Panc1 (cell line): ENCODE measurements at regions of chr7 and their contacts with region 1.

Region 1: DNA sequence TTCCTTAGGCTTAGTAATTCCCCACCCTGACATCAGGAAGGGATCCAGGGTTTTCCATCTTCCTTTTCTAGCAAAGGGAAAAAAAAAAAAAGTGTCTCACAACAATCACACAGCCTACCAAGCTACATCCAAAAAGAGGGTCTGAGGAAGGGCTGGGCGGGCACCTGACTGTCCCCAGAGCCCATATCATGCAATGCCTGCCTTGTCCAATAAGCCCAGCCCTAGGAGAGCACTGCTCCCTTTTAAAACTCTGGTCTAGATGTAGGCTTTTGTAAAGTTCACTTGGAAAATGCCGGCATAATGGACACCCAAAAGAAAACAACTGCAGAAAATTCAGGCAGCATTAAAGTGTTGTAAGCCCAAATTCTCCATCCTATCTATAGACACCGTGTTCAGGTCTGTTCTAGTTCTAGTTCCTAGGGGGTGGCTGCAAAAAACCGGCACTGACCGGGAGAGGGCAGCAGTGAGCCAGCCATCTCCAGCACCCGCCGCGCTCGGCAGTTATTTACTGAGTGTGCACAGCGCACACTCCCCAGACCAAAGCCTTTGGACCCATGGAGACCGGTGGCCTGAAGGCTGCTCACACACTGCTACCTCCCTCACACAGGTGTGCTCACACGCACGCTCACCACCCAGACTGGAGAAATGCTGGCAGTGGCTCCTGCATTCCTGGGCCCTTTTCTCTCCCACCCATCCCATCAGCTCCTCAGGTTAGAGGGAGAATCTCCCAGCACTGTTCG is 48.7 kb downstream of the PODXL start:
- DNase-seq: peak; percentile 52
- ATAC-seq: peak; percentile 88
- H3K4me3 ChIP-seq: peak overlapping the region in 1 of 2 experiments; percentile 7; a peak in 1 of 4 replicates
- H3K27ac ChIP-seq: no peak overlapping the region
- H3K4me1 ChIP-seq: no peaks in the 10 kb centered on the region
- H3K27me3 ChIP-seq: no peaks in the 10 kb centered on the region
- CTCF ChIP-seq: peak; percentile 97

Region 2: DNA sequence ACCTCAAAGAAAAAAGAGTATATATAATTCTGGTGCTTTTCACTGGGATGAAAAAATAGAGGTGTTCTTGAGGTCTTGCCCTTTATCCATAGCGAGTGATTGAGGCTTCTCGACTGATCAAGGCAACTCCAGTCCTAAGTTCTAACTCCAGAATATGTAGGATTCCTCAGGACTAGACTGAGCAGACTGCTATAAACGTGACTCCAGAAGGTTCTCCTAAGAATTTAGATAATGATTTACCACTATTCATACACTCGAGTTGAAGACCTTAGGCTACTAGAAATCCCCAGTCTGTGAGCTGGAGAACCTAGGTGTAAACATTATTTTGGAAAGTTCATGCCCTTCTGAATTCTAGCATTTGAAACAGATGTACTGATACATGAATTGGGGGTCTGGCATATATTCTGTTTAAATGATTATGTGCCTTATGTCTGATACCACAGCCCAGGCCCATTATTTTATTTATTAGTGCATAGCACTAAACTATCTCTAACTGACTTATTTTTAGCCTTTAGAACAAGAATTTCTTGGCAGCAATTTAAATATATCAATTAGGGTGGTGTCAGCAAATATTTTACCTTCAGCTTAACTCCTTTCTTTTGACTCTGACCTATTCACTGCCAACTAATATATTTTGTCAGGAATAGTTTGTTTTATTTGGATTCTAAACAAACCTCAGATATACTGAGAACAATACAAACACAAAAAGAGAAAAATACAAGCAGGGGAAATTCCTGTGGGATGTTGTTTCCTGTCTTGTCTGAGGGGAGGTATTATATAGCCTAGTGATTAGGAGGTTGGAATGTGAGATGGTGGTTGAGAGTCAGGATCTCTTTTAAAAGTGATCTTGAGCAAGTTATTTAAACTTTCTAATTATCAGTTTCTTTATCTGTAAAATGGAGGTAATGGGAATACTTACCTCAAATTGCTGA is 27.1 kb before region 1 on chr7:
- CTCF ChIA-PET with region 1: no interaction called
- POLR2A ChIA-PET with region 1: no interaction called
- in situ Hi-C with region 1: no loop called
- intact Hi-C with region 1: no loop called
- DNase-seq: no peak
- ATAC-seq: no peak
- H3K4me3 ChIP-seq: no peak overlapping the region
- H3K27ac ChIP-seq: no peak overlapping the region
- H3K4me1 ChIP-seq: no peaks in the 10 kb centered on the region
- H3K27me3 ChIP-seq: no peaks in the 10 kb centered on the region
- CTCF ChIP-seq: no peak

Region 3: DNA sequence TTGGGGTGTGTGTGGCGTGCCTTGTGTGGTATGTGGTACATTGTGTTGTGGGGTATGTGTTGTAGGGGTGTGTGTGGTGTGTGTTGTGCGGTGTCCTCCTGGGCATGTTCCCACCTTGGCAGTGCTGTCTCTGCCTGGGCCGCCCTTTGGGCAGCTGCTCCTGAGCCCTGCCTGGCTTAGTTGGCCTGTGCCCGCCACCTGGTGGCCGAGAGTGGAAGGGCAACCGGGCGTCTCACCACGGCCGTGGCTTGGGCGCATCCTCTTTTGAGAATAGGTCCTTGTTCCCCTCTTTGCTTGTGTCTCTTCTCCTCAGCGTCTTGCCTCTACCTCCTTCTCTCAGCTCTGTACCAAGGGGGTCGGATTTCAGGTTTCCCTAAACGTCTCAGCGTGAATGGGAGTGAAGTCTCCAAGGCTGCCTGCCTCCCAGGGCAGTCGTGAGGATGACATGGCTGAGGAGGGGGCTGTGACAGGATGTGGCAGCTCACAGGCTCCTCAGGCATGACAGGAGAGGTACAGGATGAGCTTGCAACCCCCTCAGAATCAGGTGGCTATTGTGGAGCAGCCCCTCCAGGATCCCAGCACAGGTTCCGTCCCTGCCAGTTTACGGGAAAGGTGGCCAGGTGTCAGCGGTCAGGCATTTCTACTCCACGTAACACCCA is 147.0 kb after region 1 on chr7:
- CTCF ChIA-PET with region 1: interaction called, 3 read pairs
- POLR2A ChIA-PET with region 1: no interaction called
- in situ Hi-C with region 1: no loop called
- intact Hi-C with region 1: loop called (anchors 1 kb)
- DNase-seq: peak; percentile 64
- ATAC-seq: peak; percentile 93
- H3K4me3 ChIP-seq: no peak overlapping the region
- H3K27ac ChIP-seq: no peak overlapping the region
- H3K4me1 ChIP-seq: peaks cover 7% of the 10 kb centered on the region; the same call in 1 of the 2 replicates
- H3K27me3 ChIP-seq: no peaks in the 10 kb centered on the region
- CTCF ChIP-seq: peak; percentile 85

Region 4: DNA sequence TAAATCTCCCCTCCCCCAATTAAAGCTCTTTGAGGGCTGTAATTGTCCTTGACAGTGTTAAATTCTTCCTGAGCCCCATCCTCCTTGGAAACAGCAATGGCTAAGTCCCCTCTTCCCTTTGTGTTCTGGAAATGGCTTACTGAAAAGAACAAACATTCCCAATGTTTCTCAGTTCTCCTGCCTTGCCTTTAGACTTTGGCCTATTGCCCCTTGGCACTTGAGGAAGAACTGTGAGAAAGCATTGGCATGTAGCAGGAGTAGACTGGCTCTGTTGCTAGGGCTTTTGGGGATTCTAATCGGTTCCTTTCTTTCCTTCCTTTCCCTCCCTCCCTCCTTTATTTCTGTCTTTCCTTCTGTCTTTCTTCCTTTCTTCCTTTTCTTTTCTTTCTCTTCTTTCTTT is 511.9 kb after region 1 on chr7:
- CTCF ChIA-PET with region 1: no interaction called
- POLR2A ChIA-PET with region 1: no interaction called
- in situ Hi-C with region 1: no loop called
- intact Hi-C with region 1: no loop called
- DNase-seq: no peak
- ATAC-seq: no peak
- H3K4me3 ChIP-seq: no peak overlapping the region
- H3K27ac ChIP-seq: no peak overlapping the region
- H3K4me1 ChIP-seq: no peaks in the 10 kb centered on the region
- H3K27me3 ChIP-seq: no peaks in the 10 kb centered on the region
- CTCF ChIP-seq: no peak